Breast epithelium (tissue), 4 donors: ENCODE measurements at regions of chr5 and their contacts with region 1.

Region 1: DNA sequence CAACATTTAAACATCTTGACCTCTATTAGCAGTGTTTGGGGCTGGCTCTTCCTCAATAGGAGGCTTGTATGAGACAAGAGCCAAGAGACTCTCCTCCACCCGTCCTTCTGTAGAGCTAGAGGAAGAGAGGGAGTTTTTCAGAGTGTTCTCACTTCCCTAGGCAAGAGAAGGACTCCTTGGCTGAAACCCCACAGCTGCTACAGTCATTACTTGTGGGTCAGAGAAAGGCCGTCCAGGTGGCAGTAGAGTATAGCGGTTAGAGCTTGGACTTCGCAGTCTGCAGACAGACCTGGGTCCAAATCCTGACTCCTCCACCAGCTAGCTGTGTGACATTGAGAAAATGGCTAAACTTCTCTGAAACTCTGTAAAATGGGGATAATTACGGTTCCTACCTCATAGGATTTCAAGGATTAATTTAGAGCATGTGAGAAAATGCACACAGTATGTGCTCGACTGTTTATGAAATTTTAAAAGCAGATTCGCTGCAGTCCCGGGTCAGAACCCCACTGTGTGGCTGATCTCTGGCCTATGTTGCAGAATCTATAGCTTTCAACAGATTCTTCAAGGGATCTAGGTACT is 80.8 kb upstream of the ARAP3 start:
- DNase-seq: no peak
- H3K4me3 ChIP-seq: no peak overlapping the region
- H3K27ac ChIP-seq: no peak overlapping the region
- H3K4me1 ChIP-seq: no peaks in the 10 kb centered on the region
- H3K27me3 ChIP-seq: peaks cover 0 to 5% of the 10 kb centered on the region in 2 donors
- CTCF ChIP-seq: no peak
- POLR2A ChIP-seq: no peak

Region 2: DNA sequence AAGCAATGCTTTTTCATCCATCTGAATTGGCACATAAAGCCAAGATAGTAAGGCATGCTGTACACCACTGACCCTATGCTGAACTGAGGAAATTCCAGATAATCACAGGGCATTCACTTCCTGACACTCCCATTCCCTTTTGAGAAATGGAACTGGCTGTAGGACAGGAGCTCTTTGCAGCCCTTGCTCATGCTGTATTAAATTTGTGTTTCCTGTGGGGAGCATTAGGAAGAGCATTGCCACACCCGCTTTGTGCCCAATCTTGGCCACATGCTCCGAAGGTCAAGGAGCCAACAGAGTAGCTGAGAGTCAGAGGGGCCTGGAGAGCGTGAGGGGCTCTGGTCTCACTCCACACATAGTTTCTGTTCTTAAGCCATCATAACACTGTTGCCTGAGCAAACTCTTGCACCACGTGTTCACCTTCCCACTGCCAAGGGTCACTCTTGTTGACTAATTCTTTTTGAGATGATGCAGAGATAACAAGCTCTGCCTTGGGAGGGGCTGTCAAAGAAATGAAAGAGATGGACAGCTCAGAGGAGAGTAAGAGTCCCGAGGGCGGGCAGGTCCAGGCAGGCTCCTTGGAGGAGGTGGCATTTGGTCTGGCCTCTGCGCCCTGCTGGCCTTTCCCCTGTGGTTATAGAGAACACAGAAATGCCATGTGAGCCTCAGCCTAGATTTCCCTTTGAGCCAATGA is 49.1 kb before region 1 on chr5:
- intact Hi-C with region 1: loop called (anchors 1 kb)
- DNase-seq: no peak
- H3K4me3 ChIP-seq: no peak overlapping the region
- H3K27ac ChIP-seq: no peak overlapping the region
- H3K4me1 ChIP-seq: no peaks in the 10 kb centered on the region
- H3K27me3 ChIP-seq: no peaks in the 10 kb centered on the region
- CTCF ChIP-seq: no peak
- POLR2A ChIP-seq: no peak

Region 3: DNA sequence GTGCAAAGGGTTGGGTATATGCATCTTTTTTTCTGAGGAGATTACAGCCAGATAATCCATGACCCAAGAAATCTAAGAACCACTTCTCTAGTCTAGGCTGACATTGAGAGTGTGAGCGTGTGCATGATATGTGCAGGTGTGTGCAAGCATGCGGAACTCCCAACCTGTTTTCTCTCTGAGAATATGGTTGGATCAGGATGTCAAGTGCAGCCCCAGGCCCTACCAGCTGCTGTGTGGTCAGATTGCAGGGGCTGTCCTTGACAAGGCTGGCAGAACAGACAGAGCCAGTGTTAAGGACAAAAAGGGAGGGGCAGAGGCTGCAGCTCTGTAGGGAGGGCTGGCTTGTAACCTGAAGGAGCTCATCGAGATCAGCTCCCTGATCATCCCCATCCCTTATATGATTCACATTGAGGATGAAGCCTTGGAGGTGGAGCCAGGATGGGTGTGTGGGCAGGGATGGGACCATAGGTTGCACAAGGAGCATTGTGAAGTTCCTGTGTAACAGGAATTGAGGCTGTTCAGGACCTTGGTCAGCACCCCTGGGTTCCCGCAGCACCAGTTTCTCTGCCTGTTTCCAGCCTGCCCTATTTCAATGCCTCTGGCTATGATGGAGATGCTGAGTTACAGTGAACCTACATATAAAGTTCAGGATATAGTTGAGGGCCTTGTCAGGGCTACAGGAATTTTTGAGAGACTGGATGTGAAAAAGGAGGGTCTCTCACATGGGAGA is 28.2 kb before region 1 on chr5:
- intact Hi-C with region 1: loop called (anchors 1 kb)
- DNase-seq: no peak
- H3K4me3 ChIP-seq: no peak overlapping the region
- H3K27ac ChIP-seq: no peak overlapping the region
- H3K4me1 ChIP-seq: no peaks in the 10 kb centered on the region
- H3K27me3 ChIP-seq: peaks cover 0 to 3% of the 10 kb centered on the region in 2 donors
- CTCF ChIP-seq: no peak
- POLR2A ChIP-seq: no peak

Region 4: GRCh38 chr5:141747152-141748141 is 15.4 kb before region 1 on chr5:
- intact Hi-C with region 1: no loop called
- DNase-seq: peak; percentile 47 to 68
- H3K4me3 ChIP-seq: no peak overlapping the region
- H3K27ac ChIP-seq: no peak overlapping the region
- H3K4me1 ChIP-seq: no peaks in the 10 kb centered on the region
- H3K27me3 ChIP-seq: peaks cover 0 to 3% of the 10 kb centered on the region in 2 donors
- CTCF ChIP-seq: no peak
- POLR2A ChIP-seq: no peak